ENCODE measurements at regions of chr2 and their contacts with region 1.

Region 1: DNA sequence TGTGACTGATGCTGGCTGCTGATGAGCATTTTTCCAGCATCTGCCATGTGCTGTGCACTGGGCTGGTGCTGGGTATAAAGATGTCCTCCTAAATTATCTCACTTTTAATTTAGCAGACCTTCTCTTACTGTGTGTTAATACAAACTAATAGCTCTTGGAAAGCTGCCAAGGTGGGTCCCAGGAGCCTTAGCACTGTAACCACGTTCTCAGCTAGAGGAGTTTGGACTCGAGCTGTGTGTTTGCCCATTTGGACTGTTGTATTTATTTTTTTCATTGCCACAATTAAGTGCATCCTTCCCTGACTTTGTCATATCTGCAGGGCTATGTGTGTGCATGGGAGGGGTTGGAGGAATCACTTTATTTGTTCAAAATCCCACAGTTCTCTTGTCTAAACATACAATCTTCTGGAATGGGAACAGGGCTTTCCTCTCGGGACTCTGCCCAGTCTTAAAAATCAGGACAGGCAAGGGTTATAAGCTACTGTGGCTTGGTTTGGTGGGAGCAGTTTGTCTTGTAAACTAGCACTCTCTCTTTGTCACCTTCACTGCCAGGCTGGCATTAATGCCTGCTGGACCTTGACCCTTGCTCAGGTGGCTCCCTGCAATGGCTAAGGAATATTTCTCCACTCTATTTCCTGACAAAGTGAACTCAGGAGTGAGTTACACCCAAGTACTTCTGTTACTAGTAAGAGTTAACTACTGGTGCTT is 129.7 kb upstream of the MGAT5 start:
- DNase-seq: no peak
- H3K4me3 ChIP-seq: no peak overlapping the region
- H3K4me3 Mint-ChIP-seq: no peak overlapping the region
- H3K27ac Mint-ChIP-seq: no peak overlapping the region
- H3K4me1 ChIP-seq: peaks cover 12% of the 10 kb centered on the region
- H3K4me1 Mint-ChIP-seq: peaks cover 29% of the 10 kb centered on the region
- H3K27me3 ChIP-seq: no peaks in the 10 kb centered on the region
- H3K27me3 Mint-ChIP-seq: no peaks in the 10 kb centered on the region
- CTCF ChIP-seq: no peak

Region 2: GRCh38 chr2:134087371-134087921 is 36.8 kb before region 1 on chr2:
- CTCF ChIA-PET with region 1: no interaction called
- POLR2A ChIA-PET with region 1: no interaction called
- intact Hi-C with region 1: no loop called
- DNase-seq: peak; percentile 59 to 70
- H3K4me3 ChIP-seq: no peak overlapping the region
- H3K4me3 Mint-ChIP-seq: peak overlapping the region; percentile 12
- H3K27ac Mint-ChIP-seq: peak overlapping the region; percentile 75
- H3K4me1 ChIP-seq: peaks cover 28% of the 10 kb centered on the region
- H3K4me1 Mint-ChIP-seq: peaks cover 21% of the 10 kb centered on the region
- H3K27me3 ChIP-seq: no peaks in the 10 kb centered on the region
- H3K27me3 Mint-ChIP-seq: no peaks in the 10 kb centered on the region
- CTCF ChIP-seq: no peak

Region 3: GRCh38 chr2:134142885-134143284 is 18.7 kb after region 1 on chr2:
- CTCF ChIA-PET with region 1: no interaction called
- POLR2A ChIA-PET with region 1: no interaction called
- intact Hi-C with region 1: loop called (anchors 1 kb)
- DNase-seq: no peak
- H3K4me3 ChIP-seq: no peak overlapping the region
- H3K4me3 Mint-ChIP-seq: no peak overlapping the region
- H3K27ac Mint-ChIP-seq: no peak overlapping the region
- H3K4me1 ChIP-seq: no peaks in the 10 kb centered on the region
- H3K4me1 Mint-ChIP-seq: peaks cover 11% of the 10 kb centered on the region
- H3K27me3 ChIP-seq: no peaks in the 10 kb centered on the region
- H3K27me3 Mint-ChIP-seq: no peaks in the 10 kb centered on the region
- CTCF ChIP-seq: no peak